ENCODE measurements at regions of chr1 and their contacts with region 1.

Region 1: DNA sequence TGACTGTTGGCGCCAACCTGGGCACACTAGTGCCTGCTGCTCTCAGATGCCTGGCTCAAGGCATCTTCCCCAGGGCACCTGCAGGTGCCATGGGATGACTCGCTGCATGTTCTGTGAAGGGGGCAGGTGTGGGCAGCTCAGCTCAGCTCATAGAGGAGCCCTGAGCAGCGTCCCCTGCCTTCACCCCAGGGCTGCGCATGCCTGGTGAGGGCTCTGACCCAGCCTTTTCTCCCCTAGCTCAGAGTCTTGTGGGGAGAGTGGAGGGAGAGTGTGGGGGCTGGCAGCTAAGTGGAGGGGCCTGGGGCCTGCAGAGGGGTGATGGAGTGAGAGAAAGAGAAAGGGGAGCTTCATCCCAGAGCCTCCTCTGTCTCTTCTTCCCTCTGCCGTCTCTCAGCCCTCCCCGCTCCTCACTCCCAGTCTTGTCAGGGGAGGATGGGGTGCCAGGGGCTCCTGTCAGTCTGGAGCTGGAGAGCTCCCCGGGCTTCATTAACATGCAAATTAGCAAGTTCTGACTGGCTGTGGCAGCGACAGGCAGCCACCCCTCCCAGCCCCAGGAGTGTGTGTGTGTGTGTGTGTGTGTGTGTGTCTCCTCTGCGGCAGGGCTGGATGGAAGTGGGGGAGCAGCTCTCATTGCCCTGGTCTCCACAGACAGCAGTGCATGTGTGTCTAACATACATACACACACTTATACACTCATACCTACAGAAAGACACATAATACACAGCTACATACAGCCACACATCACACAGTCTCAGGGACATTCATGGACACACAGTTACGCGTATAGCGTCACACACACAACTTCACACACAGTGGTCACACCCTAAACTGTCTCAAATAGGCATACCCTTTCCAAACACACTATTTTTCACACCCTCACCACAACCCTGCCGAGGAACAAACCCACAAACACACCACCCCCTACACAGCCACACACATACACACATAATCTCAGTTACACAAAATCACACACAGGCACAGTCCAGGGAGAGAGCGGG is 34.0 kb downstream of the FOXO6 start:
- DNase-seq: peak; percentile 78
- ATAC-seq: peak; percentile 89
- H3K4me3 Mint-ChIP-seq: peak overlapping the region; percentile 49
- H3K27ac Mint-ChIP-seq: no peak overlapping the region
- H3K4me1 Mint-ChIP-seq: peaks cover 59% of the 10 kb centered on the region
- H3K27me3 Mint-ChIP-seq: peaks cover 6% of the 10 kb centered on the region
- CTCF ChIP-seq: no peak

Region 2: GRCh38 chr1:41313661-41314131 is 81.6 kb before region 1 on chr1:
- CTCF ChIA-PET with region 1: interaction called, 10 read pairs
- POLR2A ChIA-PET with region 1: interaction called, 5 read pairs
- DNase-seq: peak; percentile 59
- ATAC-seq: peak; percentile 79
- H3K4me3 Mint-ChIP-seq: no peak overlapping the region
- H3K27ac Mint-ChIP-seq: no peak overlapping the region
- H3K4me1 Mint-ChIP-seq: peaks cover 22% of the 10 kb centered on the region
- H3K27me3 Mint-ChIP-seq: peaks cover 10% of the 10 kb centered on the region
- CTCF ChIP-seq: peak; percentile 70

Region 3: DNA sequence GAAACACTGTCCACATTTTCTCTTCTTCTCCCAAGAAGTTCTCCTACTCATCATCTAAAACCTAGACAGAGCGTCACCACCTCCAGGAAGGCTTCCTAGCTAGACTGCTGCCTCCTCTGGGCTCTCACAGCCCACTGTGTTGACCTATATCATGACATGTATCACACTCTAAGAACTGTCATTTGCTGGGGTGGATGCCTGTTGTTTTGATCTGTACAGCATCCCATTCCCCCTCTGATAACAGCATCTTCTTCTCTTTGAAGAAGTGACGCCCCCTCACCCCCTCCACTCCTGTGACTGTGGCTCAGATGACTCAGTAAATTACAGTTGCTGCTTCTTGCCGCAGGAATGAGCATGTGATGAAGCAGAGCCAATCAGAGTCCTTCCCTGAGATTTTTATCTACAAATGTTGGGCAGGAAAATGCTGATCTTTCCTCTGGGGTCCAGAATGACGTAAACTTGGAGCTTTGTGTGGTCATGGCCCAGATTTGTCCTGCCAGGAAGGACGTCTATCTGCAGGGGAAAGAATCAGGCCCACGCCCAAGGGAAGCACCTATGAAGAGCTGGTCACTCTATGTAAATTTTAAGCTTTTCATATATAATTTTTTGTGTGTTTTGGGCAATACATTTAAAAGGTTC is 62.0 kb before region 1 on chr1:
- CTCF ChIA-PET with region 1: interaction called, 27 read pairs
- POLR2A ChIA-PET with region 1: no interaction called
- DNase-seq: no peak
- ATAC-seq: no peak
- H3K4me3 Mint-ChIP-seq: no peak overlapping the region
- H3K27ac Mint-ChIP-seq: no peak overlapping the region
- H3K4me1 Mint-ChIP-seq: peaks cover 11% of the 10 kb centered on the region
- H3K27me3 Mint-ChIP-seq: peaks cover under 1% of the 10 kb centered on the region
- CTCF ChIP-seq: no peak

Region 4: GRCh38 chr1:41366455-41367287 is 28.6 kb before region 1 on chr1:
- CTCF ChIA-PET with region 1: interaction called, 106 read pairs
- POLR2A ChIA-PET with region 1: interaction called, 7 read pairs
- DNase-seq: peak; percentile 20
- ATAC-seq: peak; percentile 2; the same call in 1 of the 2 replicates
- H3K4me3 Mint-ChIP-seq: peak overlapping the region; percentile 67
- H3K27ac Mint-ChIP-seq: no peak overlapping the region
- H3K4me1 Mint-ChIP-seq: peaks cover 65% of the 10 kb centered on the region
- H3K27me3 Mint-ChIP-seq: peaks cover 65% of the 10 kb centered on the region
- CTCF ChIP-seq: no peak

Region 5: DNA sequence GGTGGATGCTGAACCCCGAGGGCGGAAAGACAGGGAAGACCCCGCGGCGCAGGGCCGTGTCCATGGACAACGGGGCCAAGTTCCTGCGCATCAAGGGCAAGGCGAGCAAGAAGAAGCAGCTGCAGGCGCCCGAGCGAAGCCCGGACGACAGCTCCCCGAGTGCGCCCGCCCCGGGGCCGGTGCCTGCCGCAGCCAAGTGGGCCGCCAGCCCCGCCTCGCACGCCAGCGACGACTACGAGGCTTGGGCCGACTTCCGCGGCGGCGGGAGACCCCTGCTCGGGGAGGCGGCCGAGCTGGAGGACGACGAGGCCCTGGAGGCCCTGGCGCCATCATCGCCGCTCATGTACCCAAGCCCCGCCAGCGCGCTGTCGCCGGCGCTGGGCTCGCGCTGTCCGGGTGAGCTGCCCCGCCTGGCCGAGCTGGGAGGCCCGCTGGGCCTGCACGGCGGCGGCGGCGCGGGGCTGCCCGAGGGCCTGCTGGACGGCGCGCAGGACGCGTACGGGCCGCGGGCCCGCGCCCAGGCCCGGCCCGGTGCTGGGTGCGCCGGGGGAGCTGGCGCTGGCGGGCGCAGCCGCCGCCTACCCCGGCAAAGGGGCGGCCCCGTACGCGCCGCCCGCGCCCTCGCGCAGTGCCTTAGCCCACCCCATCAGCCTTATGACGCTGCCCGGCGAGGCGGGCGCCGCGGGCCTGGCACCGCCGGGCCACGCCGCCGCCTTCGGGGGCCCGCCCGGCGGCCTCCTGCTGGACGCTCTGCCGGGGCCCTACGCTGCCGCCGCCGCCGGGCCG is 13.4 kb before region 1 on chr1:
- CTCF ChIA-PET with region 1: interaction called, 34 read pairs
- POLR2A ChIA-PET with region 1: interaction called, 9 read pairs
- DNase-seq: peak; percentile 44
- ATAC-seq: peak; percentile 36
- H3K4me3 Mint-ChIP-seq: peak overlapping the region; percentile 75
- H3K27ac Mint-ChIP-seq: no peak overlapping the region
- H3K4me1 Mint-ChIP-seq: peaks cover 43% of the 10 kb centered on the region
- H3K27me3 Mint-ChIP-seq: peaks cover 57% of the 10 kb centered on the region
- CTCF ChIP-seq: no peak

Region 6: GRCh38 chr1:41416552-41417334 is 21.5 kb after region 1 on chr1:
- CTCF ChIA-PET with region 1: interaction called, 46 read pairs
- POLR2A ChIA-PET with region 1: no interaction called
- DNase-seq: peak; percentile 82
- ATAC-seq: peak; percentile 86
- H3K4me3 Mint-ChIP-seq: no peak overlapping the region
- H3K27ac Mint-ChIP-seq: no peak overlapping the region
- H3K4me1 Mint-ChIP-seq: peaks cover 15% of the 10 kb centered on the region
- H3K27me3 Mint-ChIP-seq: peaks cover 3% of the 10 kb centered on the region; the same call in 1 of the 2 replicates
- CTCF ChIP-seq: peak; percentile 76

Region 7: GRCh38 chr1:41442546-41443251 is 47.4 kb after region 1 on chr1:
- CTCF ChIA-PET with region 1: no interaction called
- POLR2A ChIA-PET with region 1: no interaction called
- DNase-seq: no peak
- ATAC-seq: no peak
- H3K4me3 Mint-ChIP-seq: no peak overlapping the region
- H3K27ac Mint-ChIP-seq: no peak overlapping the region
- H3K4me1 Mint-ChIP-seq: no peaks in the 10 kb centered on the region
- H3K27me3 Mint-ChIP-seq: no peaks in the 10 kb centered on the region
- CTCF ChIP-seq: no peak

Region 8: DNA sequence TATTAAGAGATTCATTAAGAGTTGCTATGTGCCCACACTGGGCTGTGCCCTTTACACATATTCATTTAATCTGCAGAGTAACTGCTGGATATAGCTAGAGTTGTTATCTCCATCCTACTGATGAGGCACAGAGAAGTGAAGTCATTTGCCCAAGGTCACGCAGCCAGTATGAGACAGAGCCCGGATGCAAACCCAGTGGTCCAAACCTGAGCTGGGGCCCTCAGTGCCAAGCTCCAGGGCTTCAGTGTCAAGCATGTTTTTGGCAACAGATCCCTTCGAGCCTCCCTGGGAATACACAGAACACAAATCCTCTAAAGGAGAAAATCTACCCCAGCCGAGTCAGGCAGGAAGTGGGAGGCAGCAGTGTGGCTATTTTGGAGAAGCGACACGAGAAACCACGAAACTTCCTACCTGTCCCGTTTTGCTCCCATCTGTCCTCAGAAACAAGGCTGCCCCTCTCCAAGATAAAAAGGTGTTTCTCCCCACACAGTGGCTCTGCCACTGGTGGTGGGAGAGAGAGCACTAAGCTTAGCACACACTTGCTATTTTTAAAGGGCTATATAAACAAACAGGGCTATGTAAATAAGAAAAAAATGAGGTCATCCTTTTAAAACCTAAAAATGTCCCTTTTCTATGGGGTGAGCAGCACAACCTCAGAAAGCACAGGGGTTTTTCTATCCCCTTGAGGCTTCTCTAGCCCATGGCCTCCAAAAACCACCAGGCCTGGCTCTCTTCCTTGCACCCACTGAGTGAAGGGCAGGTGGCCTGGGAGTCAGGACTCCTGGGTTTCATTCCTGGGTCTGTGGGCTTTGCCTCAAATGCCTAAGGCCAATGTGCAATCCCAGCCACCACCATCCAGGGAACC is 227.8 kb after region 1 on chr1:
- CTCF ChIA-PET with region 1: no interaction called
- POLR2A ChIA-PET with region 1: no interaction called
- DNase-seq: no peak
- ATAC-seq: no peak
- H3K4me3 Mint-ChIP-seq: no peak overlapping the region
- H3K27ac Mint-ChIP-seq: no peak overlapping the region
- H3K4me1 Mint-ChIP-seq: peaks cover 19% of the 10 kb centered on the region
- H3K27me3 Mint-ChIP-seq: no peaks in the 10 kb centered on the region
- CTCF ChIP-seq: no peak